Mammary epithelial cell (primary cell): ENCODE measurements at regions of chrX and their contacts with region 1.

Region 1: GRCh38 chrX:47217642-47218279 is 720 bp upstream of the CDK16 start:
- DNase-seq: peak; percentile 100
- H3K4me3 ChIP-seq: peak overlapping the region; percentile 63 to 68 (median 68)
- H3K27ac ChIP-seq: peak overlapping the region; percentile 95
- H3K4me1 ChIP-seq: peaks cover 26% of the 10 kb centered on the region
- H3K27me3 ChIP-seq: no peaks in the 10 kb centered on the region
- CTCF ChIP-seq: no peak

Region 2: DNA sequence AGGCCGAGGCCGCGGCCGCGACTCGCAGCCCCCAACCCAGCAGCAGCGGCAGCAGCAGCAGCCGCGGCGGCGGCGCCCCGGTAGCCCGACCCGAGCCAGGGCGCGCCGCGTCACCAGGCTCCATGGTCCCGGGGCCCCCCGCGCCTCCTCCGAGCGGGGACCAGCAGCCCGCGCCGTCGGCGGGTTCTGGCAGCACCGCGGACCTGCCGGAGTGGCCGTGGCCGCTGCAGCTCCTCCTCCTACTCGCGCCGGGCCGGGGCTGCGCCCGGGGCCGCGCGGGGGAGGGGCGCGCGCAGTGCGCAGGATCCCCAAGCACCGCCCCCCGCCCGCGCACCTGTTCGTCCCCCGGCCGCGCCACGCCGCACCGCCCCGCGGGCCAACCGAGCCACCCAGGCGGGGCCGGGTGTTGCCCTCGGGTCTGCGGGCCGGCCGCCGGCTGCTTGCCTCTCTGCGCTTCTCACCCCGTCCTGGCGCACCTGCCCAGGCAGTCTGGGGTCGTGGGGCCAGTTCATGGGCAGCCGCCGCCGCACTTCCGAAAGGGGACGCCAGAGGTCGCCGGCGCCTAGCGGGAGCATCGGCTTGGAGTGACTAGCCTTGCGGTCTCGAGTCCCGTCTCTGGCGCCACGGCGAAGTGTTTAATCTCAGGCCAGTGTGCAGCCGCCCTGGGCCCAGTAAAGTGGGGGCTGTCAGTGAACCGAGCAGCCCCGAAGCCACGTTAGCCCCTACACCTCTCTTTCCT is 458.7 kb before region 1 on chrX and contains the start of gene SLC9A7:
- CTCF ChIA-PET with region 1: no interaction called
- dilution Hi-C with region 1: no loop called
- in situ Hi-C with region 1: no loop called
- intact Hi-C with region 1: no loop called
- DNase-seq: peak; percentile 72
- H3K4me3 ChIP-seq: peak within 1 kb of the TSS; percentile 56 to 79 (median 64)
- H3K27ac ChIP-seq: peak within 1 kb of the TSS; percentile 17
- H3K4me1 ChIP-seq: peaks cover 5% of the 10 kb centered on the region
- H3K27me3 ChIP-seq: no peaks in the 10 kb centered on the region
- CTCF ChIP-seq: peak; percentile 60 to 88
- total RNA-seq, gene SLC9A7: 32.4 to 72.7 TPM

Region 3: DNA sequence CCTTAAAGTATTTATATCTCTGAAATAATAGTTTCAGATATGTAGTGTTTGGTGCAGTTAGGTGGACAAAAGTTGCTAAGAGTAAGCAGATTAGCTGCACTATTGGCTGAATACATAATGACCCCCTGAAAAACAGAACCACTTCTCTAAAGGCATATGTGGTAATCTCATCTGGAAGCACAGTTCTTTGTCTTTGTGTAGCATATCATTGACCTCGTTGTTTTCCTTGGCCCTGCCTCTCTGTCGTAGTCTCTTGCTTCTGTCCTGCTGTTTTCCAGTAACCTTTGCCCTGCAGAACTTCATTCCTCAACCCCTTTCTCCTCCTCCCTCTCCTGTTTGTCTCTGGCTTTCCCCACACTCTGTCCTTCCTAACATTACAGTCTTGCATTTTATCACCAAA is 264.2 kb before region 1 on chrX:
- CTCF ChIA-PET with region 1: no interaction called
- dilution Hi-C with region 1: no loop called
- in situ Hi-C with region 1: no loop called
- intact Hi-C with region 1: no loop called
- DNase-seq: no peak
- H3K4me3 ChIP-seq: no peak overlapping the region
- H3K27ac ChIP-seq: no peak overlapping the region
- H3K4me1 ChIP-seq: no peaks in the 10 kb centered on the region
- H3K27me3 ChIP-seq: no peaks in the 10 kb centered on the region
- CTCF ChIP-seq: no peak

Region 4: GRCh38 chrX:47233337-47234113 is 15.8 kb after region 1 on chrX:
- CTCF ChIA-PET with region 1: no interaction called
- dilution Hi-C with region 1: no loop called
- in situ Hi-C with region 1: no loop called
- intact Hi-C with region 1: loop called (anchors 1 kb)
- DNase-seq: peak; percentile 95
- H3K4me3 ChIP-seq: peak overlapping the region; percentile 51 to 81 (median 74)
- H3K27ac ChIP-seq: peak overlapping the region; percentile 98
- H3K4me1 ChIP-seq: peaks cover 10% of the 10 kb centered on the region
- H3K27me3 ChIP-seq: no peaks in the 10 kb centered on the region
- CTCF ChIP-seq: no peak

Region 5: GRCh38 chrX:47311932-47312774 is 94.4 kb after region 1 on chrX:
- CTCF ChIA-PET with region 1: no interaction called
- dilution Hi-C with region 1: no loop called
- in situ Hi-C with region 1: no loop called
- intact Hi-C with region 1: loop called (anchors 1 kb)
- DNase-seq: peak; percentile 62
- H3K4me3 ChIP-seq: no peak overlapping the region
- H3K27ac ChIP-seq: no peak overlapping the region
- H3K4me1 ChIP-seq: no peaks in the 10 kb centered on the region
- H3K27me3 ChIP-seq: no peaks in the 10 kb centered on the region
- CTCF ChIP-seq: peak; percentile 50 to 72

Region 6: GRCh38 chrX:47361538-47362511 is 144.1 kb after region 1 on chrX:
- CTCF ChIA-PET with region 1: no interaction called
- dilution Hi-C with region 1: no loop called
- in situ Hi-C with region 1: no loop called
- intact Hi-C with region 1: loop called (anchors 5 kb)
- DNase-seq: peak; percentile 86
- H3K4me3 ChIP-seq: peak overlapping the region; percentile 11 to 44 (median 22)
- H3K27ac ChIP-seq: peak overlapping the region; percentile 65
- H3K4me1 ChIP-seq: no peaks in the 10 kb centered on the region
- H3K27me3 ChIP-seq: no peaks in the 10 kb centered on the region
- CTCF ChIP-seq: peak in 1 of 2 donors; percentile 11

Region 7: GRCh38 chrX:47384502-47384901 is 166.7 kb after region 1 on chrX:
- CTCF ChIA-PET with region 1: no interaction called
- dilution Hi-C with region 1: loop called (anchors 5 kb)
- in situ Hi-C with region 1: no loop called
- intact Hi-C with region 1: loop called (anchors 1 kb)
- DNase-seq: peak; percentile 56
- H3K4me3 ChIP-seq: no peak overlapping the region
- H3K27ac ChIP-seq: no peak overlapping the region
- H3K4me1 ChIP-seq: no peaks in the 10 kb centered on the region
- H3K27me3 ChIP-seq: no peaks in the 10 kb centered on the region
- CTCF ChIP-seq: peak; percentile 63 to 74

Region 8: DNA sequence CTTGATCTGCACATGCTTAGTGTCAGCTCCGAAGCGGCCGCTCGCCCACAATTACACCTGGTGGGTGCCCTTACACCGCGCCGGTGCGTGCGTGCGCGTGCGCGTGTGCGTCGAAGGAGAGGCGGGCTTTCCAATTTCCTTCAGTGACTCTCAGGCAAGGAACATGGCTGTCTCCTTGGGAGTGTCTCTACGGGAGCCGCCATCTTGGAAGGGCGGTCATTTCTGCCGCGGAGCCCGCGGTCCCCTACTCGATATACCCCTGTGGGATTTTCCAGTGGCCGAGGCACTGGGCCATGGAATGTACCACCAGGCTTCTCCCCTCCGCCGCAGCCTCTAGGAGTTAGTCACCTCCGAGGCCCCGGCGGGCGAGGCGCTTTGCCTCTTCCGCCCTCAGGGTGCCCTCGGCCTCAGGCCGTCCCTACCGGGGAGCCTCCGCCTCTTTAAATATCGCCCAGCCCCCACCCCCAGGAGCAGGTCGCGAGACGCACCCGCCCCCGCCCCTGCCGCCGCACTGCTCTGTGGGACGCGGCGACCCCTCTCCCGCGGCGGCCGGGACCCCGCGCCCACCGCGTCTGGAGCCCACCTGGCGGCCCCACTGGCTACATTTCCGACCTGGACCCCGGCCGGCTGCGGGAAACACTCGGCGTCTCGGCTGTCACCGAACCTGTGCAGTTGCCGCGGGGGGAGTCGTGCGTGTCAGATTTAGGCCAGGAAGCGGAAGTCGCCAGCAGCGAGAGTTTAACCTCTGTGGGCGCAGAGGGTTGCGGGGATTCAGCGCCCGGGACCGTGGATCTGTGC is 264.9 kb after region 1 on chrX and contains the start of gene ZNF41:
- CTCF ChIA-PET with region 1: no interaction called
- dilution Hi-C with region 1: no loop called
- in situ Hi-C with region 1: loop called in 1 of 2 experiments (anchors 25 kb)
- intact Hi-C with region 1: no loop called
- DNase-seq: peak; percentile 86
- H3K4me3 ChIP-seq: peak within 1 kb of the TSS; percentile 62 to 71 (median 70)
- H3K27ac ChIP-seq: peak within 1 kb of the TSS; percentile 48
- H3K4me1 ChIP-seq: no peaks in the 10 kb centered on the region
- H3K27me3 ChIP-seq: no peaks in the 10 kb centered on the region
- CTCF ChIP-seq: no peak
- total RNA-seq, gene ZNF41: 6.0 to 9.5 TPM

Region 9: DNA sequence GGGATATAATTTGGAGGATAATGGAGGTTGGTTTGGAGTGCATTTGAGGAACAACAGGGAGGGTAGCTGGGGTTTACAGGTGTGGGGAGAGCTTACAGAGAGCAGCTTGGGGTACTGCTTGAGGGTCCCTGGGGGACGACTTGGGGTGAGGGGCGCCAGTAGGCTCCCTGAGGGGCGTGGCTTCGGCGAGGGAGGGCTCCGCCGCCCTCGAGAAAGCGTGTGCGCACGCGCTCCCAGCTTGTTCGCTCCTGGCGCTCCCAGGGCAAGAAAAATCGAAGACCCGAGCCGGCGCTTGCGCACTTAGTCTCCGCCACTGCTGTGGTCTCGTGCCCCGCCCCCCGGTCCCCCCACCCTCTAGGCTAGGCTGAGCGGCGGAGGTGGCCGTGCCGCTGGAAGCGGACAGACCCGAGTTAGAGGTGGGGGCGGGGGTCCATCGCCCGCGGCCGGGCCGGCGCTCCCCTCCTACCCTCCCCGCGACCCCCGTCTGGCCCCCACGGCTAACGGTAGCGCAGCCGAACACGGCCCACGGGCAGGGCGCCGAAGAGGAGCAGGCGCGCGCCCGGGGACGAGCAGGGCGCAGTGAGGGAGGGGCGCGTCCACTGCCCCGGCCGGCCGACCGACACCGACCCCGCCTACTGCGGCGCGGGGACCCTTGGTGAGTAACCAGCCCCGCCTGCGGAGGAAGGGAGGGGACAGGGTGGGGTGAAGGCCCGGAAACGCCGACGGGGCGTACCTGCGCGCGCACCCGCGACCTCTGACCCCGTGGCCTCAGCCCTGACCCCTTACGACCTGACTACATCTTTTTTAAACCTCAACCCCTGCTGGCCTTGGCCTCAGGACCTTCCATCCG is 1835.7 kb after region 1 on chrX:
- CTCF ChIA-PET with region 1: no interaction called
- dilution Hi-C with region 1: no loop called
- in situ Hi-C with region 1: no loop called
- intact Hi-C with region 1: no loop called
- DNase-seq: no peak
- H3K4me3 ChIP-seq: peak overlapping the region in 2 of 3 experiments; percentile 52 to 53
- H3K27ac ChIP-seq: no peak overlapping the region
- H3K4me1 ChIP-seq: no peaks in the 10 kb centered on the region
- H3K27me3 ChIP-seq: no peaks in the 10 kb centered on the region
- CTCF ChIP-seq: no peak